ENCODE measurements at regions of chr4 and their contacts with region 1.

Region 1: DNA sequence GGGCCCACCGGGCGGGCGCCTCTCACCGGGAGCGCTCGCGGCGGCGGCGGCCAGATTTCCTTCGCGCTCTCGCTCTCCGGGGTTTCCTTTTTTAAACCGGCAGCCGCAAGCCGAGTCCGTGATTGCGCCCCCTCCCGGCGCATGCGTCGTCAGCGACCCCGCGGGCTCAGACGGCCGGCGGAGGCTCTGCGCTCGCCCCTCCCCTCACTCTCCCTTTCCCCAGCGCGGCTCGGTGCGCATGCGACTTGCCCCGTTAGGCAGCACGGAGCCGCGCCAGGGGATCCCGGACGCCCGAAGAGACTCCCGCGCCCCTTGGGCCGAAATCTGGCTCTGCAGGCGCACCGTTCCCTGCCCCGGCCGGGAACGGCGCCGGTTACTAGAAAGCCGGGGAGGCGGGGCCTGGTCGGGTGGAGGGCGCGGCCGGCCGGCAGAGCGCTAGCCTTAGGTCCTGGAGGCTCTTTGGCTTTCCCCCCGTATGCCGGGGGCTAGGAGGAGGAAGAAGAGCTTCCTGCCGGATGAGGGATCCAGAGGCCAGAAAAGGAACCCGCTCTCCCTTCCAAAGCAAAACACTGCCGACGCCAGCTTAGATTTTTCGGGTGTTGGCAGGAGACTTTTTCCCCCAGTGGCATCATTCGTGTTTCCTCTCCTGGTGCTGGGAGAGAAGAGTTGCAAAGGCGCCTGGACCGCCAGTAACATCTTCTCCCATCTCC is at the start of gene CLOCK:
- DNase-seq: peak; percentile 88 to 90
- ATAC-seq: peak; percentile 89 to 96 (median 92)
- H3K4me3 ChIP-seq: peak within 1 kb of the TSS; percentile 73 to 99 (median 98)
- H3K27ac ChIP-seq: peak within 1 kb of the TSS; percentile 94 to 100 (median 99)
- H3K4me1 ChIP-seq: peaks cover 0 to 28% (median 19%) of the 10 kb centered on the region in 9 donors
- H3K27me3 ChIP-seq: no peaks in the 10 kb centered on the region
- CTCF ChIP-seq: peak; percentile 42 to 78 (median 70)
- total RNA-seq, gene CLOCK: 25.4 to 40.7 (median 32.5) TPM

Region 2: GRCh38 chr4:54855191-54855854 is 691.6 kb before region 1 on chr4:
- intact Hi-C with region 1: no loop called
- DNase-seq: no peak
- ATAC-seq: peak in 2 of 8 donors; percentile 7 to 24
- H3K4me3 ChIP-seq: no peak overlapping the region
- H3K27ac ChIP-seq: no peak overlapping the region
- H3K4me1 ChIP-seq: peaks cover 0 to under 1% (median 0%) of the 10 kb centered on the region in 9 donors
- H3K27me3 ChIP-seq: no peaks in the 10 kb centered on the region
- CTCF ChIP-seq: no peak

Region 3: DNA sequence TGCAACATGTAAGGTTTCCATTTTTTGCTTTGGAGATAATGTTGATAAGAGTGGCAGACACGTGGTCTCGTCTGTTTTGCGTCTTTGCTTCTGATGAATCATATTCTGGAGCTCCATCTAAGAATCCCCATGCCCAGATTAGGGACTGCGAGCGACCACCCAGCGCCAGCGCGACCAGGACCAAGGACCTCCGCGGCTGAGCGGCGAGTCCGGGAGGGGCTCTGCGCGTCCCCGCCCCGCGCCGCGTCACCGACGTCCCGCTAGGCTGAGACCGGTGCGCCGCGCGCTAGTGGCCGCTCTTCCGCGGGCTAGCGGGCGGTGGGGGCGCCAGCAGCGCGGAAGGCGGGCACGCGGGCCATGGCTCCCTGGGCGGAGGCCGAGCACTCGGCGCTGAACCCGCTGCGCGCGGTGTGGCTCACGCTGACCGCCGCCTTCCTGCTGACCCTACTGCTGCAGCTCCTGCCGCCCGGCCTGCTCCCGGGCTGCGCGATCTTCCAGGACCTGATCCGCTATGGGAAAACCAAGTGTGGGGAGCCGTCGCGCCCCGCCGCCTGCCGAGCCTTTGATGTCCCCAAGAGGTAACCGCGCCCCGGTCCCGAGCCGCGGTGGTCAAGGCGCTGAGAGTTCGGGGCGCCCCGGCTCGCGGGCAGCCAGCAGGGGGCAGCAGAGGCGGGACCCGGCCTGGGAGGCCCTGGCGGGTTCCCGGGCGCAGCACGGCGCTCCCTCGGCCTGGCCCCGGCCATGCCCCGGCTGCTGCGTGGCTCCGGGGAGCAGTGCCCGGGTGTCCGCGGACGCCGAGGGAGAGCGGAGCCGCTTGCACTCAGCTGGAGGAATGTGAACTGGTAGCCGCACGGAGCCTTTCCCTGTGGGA is 200.7 kb before region 1 on chr4 and contains the start of gene SRD5A3:
- intact Hi-C with region 1: loop called in 9 of 10 experiments (anchors 5 kb)
- DNase-seq: peak; percentile 85 to 91
- ATAC-seq: peak; percentile 96 to 99 (median 97)
- H3K4me3 ChIP-seq: peak within 1 kb of the TSS; percentile 39 to 91 (median 82)
- H3K27ac ChIP-seq: peak within 1 kb of the TSS; percentile 95 to 99 (median 96)
- H3K4me1 ChIP-seq: peaks cover 5 to 29% (median 15%) of the 10 kb centered on the region in 9 donors
- H3K27me3 ChIP-seq: no peaks in the 10 kb centered on the region
- CTCF ChIP-seq: peak; percentile 89 to 98 (median 96)
- total RNA-seq, gene SRD5A3: 4.4 to 14.6 (median 7.7) TPM

Region 4: GRCh38 chr4:55435141-55435841 is 111.6 kb before region 1 on chr4:
- intact Hi-C with region 1: loop called in 2 of 10 experiments (anchors 10 kb)
- DNase-seq: no peak
- ATAC-seq: peak in 4 of 8 donors; percentile 28 to 55 (median 40)
- H3K4me3 ChIP-seq: no peak overlapping the region
- H3K27ac ChIP-seq: no peak overlapping the region
- H3K4me1 ChIP-seq: peaks cover 0 to 6% (median 0%) of the 10 kb centered on the region in 9 donors
- H3K27me3 ChIP-seq: no peaks in the 10 kb centered on the region
- CTCF ChIP-seq: peak in 3 of 9 donors; percentile 14 to 26 (median 22)

Region 5: DNA sequence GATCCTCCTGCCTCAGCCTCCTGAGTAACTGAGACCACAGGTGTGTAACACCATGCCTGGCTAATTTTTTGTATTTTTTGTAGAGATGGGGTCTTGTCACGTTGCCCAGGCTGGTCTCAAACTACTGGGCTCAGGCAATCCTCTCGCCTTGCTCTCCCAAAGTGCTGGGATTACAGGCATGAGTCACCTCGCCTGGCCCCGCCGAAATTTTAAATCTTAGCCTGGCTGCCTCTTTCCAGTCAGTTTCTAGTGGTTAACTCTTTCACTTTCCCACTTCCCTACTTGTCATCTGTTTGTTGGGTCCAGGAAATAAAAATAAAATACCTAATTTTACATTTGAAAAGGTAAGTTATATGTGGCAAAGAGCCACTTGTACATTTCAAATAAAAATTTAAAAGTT is 88.7 kb before region 1 on chr4:
- intact Hi-C with region 1: loop called in 2 of 10 experiments (anchors 10 kb)
- DNase-seq: no peak
- ATAC-seq: no peak
- H3K4me3 ChIP-seq: no peak overlapping the region
- H3K27ac ChIP-seq: no peak overlapping the region
- H3K4me1 ChIP-seq: no peaks in the 10 kb centered on the region
- H3K27me3 ChIP-seq: no peaks in the 10 kb centered on the region
- CTCF ChIP-seq: no peak

Region 6: DNA sequence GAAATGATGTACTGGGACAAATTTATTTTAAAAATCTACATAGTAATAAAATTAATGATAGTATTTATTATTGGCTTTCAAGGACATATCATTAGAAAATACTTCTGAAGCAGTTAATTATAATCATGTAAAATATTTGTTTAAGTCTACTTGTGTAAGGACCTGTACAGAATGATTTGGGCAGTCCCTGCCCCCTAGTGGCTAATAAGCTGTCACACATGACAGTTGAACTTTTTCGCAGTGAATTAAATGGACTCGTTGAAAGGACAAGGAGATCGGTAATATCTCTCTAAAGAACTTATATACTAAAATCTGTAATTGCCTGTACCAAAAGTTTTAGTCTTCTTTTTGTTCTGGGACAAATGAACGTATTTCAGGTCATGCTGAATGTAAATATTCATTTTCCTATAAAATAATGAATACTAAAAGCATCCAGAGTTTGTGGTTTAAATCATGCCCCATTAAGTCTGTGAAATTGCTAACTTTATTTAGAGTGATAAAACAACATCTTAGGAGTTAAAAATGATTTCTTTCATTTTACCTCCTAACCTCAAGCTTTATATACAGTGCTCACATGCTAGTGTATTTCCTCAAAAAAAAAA is 320.2 kb after region 1 on chr4:
- intact Hi-C with region 1: loop called in 2 of 10 experiments (anchors 10 kb)
- DNase-seq: peak in 1 of 2 donors; percentile 8
- ATAC-seq: peak; percentile 64 to 96 (median 90)
- H3K4me3 ChIP-seq: no peak overlapping the region
- H3K27ac ChIP-seq: peak overlapping the region in 6 of 10 donors; percentile 36 to 77 (median 61)
- H3K4me1 ChIP-seq: peaks cover 0 to 27% (median 20%) of the 10 kb centered on the region in 9 donors
- H3K27me3 ChIP-seq: no peaks in the 10 kb centered on the region
- CTCF ChIP-seq: peak; percentile 65 to 95 (median 88)